ENCODE measurements at regions of chr2 and their contacts with region 1.

Region 1: DNA sequence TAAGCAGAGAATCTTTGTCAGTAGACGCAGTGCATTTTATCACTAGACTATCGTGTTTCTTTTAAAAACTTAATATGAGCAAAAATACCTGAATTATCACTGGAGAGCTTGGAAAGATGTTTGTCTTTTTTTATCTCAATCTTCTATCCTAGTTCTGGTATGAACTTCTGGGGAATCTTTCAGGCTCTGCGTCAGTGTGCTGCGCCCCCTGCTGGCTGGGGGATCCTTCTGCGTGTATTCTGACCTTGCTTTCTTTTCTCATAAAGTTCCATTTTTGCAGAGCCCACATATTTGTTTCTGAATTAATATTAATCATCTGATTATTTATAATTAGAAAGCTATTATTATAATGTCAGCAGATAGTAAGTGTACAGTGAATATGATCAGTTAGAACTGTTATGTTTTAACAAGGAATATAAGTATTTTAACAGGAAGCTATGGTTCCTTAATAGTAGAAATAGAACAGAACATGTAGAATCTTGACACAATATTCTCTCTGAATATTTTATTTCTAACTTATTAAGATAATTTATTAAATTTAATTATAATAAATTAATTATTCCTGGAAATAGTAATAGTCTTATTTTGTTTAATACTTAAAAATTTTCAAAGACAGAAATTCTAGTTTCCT is 945.0 kb upstream of the CRIM1 start:
- DNase-seq: no peak

Region 2: GRCh38 chr2:33673937-33674336 is 1736.6 kb before region 1 on chr2:
- intact Hi-C with region 1: loop called (anchors 10 kb)
- DNase-seq: no peak

Region 3: DNA sequence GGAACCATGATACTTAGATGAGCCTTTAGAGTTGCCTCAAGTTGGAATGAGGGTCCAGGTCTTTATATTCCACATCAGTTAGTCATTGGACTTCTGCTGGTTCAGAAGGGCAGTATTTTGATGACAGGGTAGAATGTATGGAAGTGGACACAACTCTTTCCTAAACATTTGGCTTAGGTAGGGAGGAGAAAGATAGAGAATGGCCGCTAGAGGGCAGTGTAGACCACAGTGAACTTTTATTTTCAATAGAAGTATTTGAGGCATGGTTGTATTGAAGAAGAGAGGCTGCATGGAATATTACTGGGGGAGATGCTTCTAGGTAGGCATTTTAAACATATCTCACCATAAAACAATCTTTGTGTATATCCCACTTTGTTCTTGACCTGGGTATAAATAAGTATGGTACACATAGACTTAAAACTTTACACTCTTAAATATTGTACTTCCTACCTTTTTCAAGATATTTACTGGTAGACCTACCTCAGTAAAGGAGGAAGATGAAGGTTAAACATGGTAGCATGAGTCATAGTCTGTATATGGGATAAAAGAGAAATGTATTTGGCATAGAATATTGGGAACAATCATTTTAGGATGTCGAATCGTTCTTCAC is 1313.9 kb before region 1 on chr2:
- intact Hi-C with region 1: loop called (anchors 5 kb)
- DNase-seq: no peak

Region 4: GRCh38 chr2:35562488-35562887 is 151.9 kb after region 1 on chr2:
- intact Hi-C with region 1: no loop called
- DNase-seq: no peak